GM12878 (cell line): ENCODE measurements at regions of chr12 and their contacts with region 1.

Region 1: GRCh38 chr12:6688999-6689882 is at the start of gene ZNF384:
- DNase-seq: peak; percentile 97
- ATAC-seq: peak; percentile 83
- H3K4me3 ChIP-seq: peak within 1 kb of the TSS; percentile 80
- H3K27ac ChIP-seq: peak within 1 kb of the TSS; percentile 97
- H3K4me1 ChIP-seq: peaks cover 10% of the 10 kb centered on the region; the same call in 1 of the 2 replicates
- H3K27me3 ChIP-seq: no peaks in the 10 kb centered on the region
- CTCF ChIP-seq: 0 out of 6 replicates have a peak, but pooled peaks of 1 of the 3 experiments have one; percentile 0
- EP300 ChIP-seq: peak in 1 of 2 experiments; percentile 17; a peak in 1 of 4 replicates
- POLR2A ChIP-seq: peak; percentile 88
- RAD21 ChIP-seq: no peak
- polyA plus RNA-seq, gene ZNF384: 0.46 to 1.3 TPM

Region 2: GRCh38 chr12:6554168-6555017 is 134.8 kb before region 1 on chr12:
- CTCF ChIA-PET with region 1: interaction called, 17 read pairs
- POLR2A ChIA-PET with region 1: no interaction called
- RAD21 ChIA-PET with region 1: interaction called, 3 read pairs
- SMC1A ChIA-PET with region 1: interaction called, 4 read pairs
- in situ Hi-C with region 1: no loop called
- intact Hi-C with region 1: no loop called
- DNase-seq: no peak
- ATAC-seq: peak; percentile 83
- H3K4me3 ChIP-seq: peak overlapping the region; percentile 89
- H3K27ac ChIP-seq: peak overlapping the region; percentile 27
- H3K4me1 ChIP-seq: peaks cover 10% of the 10 kb centered on the region
- H3K27me3 ChIP-seq: no peaks in the 10 kb centered on the region
- CTCF ChIP-seq: peak; percentile 80 to 85 (median 84)
- EP300 ChIP-seq: no peak
- POLR2A ChIP-seq: no peak
- RAD21 ChIP-seq: peak; percentile 48

Region 3: DNA sequence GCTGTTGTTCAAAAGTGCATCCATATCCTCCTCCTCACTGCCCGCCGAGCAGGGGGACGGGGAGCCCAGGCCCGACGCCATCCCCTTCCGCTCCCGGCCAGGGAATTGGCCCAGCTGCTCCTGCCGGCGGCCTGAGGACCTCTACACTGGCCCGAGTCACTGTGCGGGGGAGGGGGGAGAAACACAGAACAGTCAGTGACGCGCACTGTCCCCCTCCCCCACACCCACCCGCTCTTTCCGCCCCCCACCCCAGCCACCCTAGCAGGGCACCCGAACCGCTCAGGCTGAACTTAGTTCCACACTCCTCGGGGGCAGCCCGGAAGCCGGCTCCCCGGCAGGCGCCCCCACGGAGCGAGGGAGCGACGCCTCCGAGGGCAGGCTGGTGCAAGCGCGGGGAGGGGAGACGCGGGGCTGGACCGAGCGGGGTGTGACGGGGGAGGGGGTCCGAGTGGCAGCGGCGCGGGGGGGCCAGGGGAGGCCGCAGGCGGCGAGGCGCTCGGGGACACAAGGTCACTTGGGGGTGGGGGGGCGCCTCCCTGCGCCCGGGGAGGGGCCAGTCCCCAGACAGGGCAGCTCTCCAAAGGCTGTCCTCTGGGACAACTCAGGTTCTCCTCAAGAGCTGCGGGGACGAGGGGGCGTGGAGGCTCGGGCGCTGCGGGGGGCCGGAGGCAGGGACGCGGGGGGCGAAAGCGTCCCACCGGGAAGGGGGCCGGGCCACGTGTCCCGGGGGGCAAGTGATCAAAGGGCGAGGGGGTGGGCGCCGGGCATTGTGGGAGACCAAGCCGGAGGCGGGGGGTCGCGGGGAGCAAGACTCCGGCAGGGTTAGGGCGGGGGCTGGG is 82.7 kb before region 1 on chr12:
- CTCF ChIA-PET with region 1: interaction called, 20 read pairs
- POLR2A ChIA-PET with region 1: interaction called, 8 read pairs
- RAD21 ChIA-PET with region 1: interaction called, 7 read pairs
- SMC1A ChIA-PET with region 1: interaction called, 7 read pairs
- in situ Hi-C with region 1: no loop called
- intact Hi-C with region 1: no loop called
- DNase-seq: no peak
- ATAC-seq: peak; percentile 56
- H3K4me3 ChIP-seq: peak overlapping the region; percentile 99
- H3K27ac ChIP-seq: peak overlapping the region; percentile 70
- H3K4me1 ChIP-seq: peaks cover 29% of the 10 kb centered on the region
- H3K27me3 ChIP-seq: no peaks in the 10 kb centered on the region
- CTCF ChIP-seq: no peak
- EP300 ChIP-seq: no peak
- POLR2A ChIP-seq: peak; percentile 74
- RAD21 ChIP-seq: no peak

Region 4: DNA sequence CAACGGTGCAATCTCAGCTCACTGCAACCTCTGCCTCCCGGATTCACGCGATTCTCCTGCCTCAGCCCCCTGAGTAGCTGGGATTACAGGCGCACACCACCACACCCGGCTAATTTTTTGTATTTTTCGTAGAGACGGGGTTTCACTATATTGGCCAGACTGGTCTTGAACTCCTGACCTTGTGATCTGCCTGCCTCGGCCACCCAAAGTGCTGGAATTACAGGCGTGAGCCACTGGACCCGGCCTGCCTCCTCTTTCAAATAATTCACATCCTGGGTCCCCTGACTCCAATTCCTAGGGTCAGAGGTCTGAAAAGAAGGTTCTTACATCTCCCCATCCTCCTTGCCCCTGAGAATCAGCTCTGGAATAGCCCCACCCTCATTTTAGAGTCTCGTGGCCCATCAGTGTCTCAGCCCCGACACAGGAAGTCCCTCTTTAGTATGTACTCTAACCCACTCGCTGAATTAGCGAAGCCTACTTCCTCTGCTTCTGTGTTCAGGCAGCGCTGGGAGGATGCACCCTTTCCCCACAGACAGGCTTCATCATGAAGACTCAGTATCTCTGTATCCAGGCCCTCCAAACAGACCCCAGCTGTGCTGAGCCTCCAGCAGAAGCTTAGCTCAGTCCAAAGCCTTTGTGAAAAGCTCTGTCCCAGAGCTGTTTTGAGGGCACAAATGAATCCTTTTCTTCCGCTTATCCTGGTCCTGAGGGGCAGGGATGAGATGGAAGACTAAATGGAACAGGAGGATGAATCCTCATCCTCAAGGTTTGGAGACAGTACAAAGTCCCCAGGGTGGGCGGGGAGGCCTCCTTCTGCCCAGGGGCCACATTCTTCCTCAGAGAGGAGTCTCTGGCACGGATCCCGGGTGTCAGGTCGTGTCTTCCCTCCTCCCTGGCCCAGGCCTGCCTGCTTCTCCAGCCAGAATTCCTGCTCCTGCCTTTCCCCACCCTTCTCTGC is 56.9 kb before region 1 on chr12:
- CTCF ChIA-PET with region 1: interaction called, 5 read pairs
- POLR2A ChIA-PET with region 1: interaction called, 23 read pairs
- RAD21 ChIA-PET with region 1: interaction called, 7 read pairs
- SMC1A ChIA-PET with region 1: interaction called, 13 read pairs
- in situ Hi-C with region 1: no loop called
- intact Hi-C with region 1: loop called (anchors 2 kb)
- DNase-seq: peak; percentile 81
- ATAC-seq: peak; percentile 78
- H3K4me3 ChIP-seq: peak overlapping the region; percentile 57
- H3K27ac ChIP-seq: peak overlapping the region; percentile 90
- H3K4me1 ChIP-seq: peaks cover 52% of the 10 kb centered on the region
- H3K27me3 ChIP-seq: no peaks in the 10 kb centered on the region
- CTCF ChIP-seq: no peak
- EP300 ChIP-seq: peak in 1 of 2 experiments; percentile 12; a peak in 1 of 4 replicates
- POLR2A ChIP-seq: peak; percentile 85
- RAD21 ChIP-seq: no peak

Region 5: DNA sequence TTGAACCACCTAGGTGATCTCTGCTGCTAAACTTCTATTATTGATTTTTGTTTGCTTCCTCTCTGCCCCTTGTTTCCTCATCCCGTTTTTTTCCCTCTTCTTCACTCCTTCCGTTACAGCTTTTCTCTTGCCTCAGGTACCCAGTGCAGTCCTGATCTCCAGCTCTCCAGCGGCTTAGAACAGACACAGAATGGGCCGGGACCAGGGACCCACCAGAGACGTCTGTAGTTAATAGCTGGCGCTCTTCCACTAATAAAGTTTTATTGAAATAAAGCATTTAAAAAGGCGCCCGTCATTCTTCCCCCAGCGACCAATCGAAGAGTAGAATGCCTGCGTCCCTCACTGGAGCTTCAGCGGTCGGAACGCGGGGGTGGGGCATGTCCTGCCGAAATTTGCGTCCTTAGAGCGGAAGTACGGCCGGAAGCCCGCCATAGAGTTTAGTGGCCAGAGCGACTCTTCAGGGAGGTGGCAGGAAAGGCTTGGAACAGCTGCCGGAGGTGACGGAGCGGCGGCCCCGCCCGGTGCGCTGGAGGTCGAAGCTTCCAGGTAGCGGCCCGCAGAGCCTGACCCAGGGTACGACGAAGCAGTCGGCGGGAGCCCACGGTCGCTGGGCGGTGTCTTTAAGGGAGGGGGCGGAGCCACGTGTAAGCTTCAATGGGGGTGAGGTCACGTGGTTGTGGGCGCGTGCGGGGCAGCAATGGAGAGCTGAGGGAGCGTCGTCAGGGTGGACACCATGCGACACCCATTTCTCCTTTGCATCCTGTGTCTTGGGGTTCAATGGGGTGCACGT is 34.6 kb after region 1 on chr12 and contains the start of gene COPS7A:
- CTCF ChIA-PET with region 1: interaction called, 15 read pairs
- POLR2A ChIA-PET with region 1: interaction called, 53 read pairs
- RAD21 ChIA-PET with region 1: interaction called, 45 read pairs
- SMC1A ChIA-PET with region 1: interaction called, 31 read pairs
- in situ Hi-C with region 1: no loop called
- intact Hi-C with region 1: loop called (anchors 1 kb)
- DNase-seq: peak; percentile 97
- ATAC-seq: peak; percentile 98
- H3K4me3 ChIP-seq: peak within 1 kb of the TSS; percentile 91
- H3K27ac ChIP-seq: peak within 1 kb of the TSS; percentile 80
- H3K4me1 ChIP-seq: no peaks in the 10 kb centered on the region; the same call in 1 of the 2 replicates
- H3K27me3 ChIP-seq: no peaks in the 10 kb centered on the region
- CTCF ChIP-seq: peak in 1 of 3 experiments; percentile 10; a peak in 1 of 6 replicates
- EP300 ChIP-seq: 0 out of 4 replicates have a peak, but pooled peaks of 1 of the 2 experiments have one; percentile 11
- POLR2A ChIP-seq: peak; percentile 93
- RAD21 ChIP-seq: no peak
- polyA plus RNA-seq, gene COPS7A: 25.7 to 26.1 TPM

Region 6: DNA sequence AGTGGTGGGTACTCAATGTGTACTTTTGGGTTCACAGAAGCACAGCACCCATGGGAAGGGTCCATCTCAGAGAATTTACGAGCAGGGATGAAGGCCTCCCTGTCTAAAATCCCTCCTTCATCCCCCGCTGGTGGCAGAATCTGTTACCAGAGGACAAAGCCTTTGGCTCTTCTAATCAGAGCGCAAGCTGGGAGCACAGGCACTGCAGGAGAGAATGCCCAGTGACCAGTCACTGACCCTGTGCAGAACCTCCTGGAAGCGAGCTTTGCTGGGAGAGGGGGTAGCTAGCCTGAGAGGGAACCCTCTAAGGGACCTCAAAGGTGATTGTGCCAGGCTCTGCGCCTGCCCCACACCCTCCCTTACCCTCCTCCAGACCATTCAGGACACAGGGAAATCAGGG is 130.9 kb after region 1 on chr12:
- CTCF ChIA-PET with region 1: no interaction called
- POLR2A ChIA-PET with region 1: no interaction called
- RAD21 ChIA-PET with region 1: no interaction called
- SMC1A ChIA-PET with region 1: no interaction called
- in situ Hi-C with region 1: no loop called
- intact Hi-C with region 1: no loop called
- DNase-seq: no peak
- ATAC-seq: no peak
- H3K4me3 ChIP-seq: no peak overlapping the region
- H3K27ac ChIP-seq: no peak overlapping the region
- H3K4me1 ChIP-seq: no peaks in the 10 kb centered on the region; the same call in 1 of the 2 replicates
- H3K27me3 ChIP-seq: peaks cover 5 to 22% of the 10 kb centered on the region in 2 experiments
- CTCF ChIP-seq: no peak
- EP300 ChIP-seq: no peak
- POLR2A ChIP-seq: no peak
- RAD21 ChIP-seq: no peak